ENCODE measurements at regions of chr2 and their contacts with region 1.

Region 1: DNA sequence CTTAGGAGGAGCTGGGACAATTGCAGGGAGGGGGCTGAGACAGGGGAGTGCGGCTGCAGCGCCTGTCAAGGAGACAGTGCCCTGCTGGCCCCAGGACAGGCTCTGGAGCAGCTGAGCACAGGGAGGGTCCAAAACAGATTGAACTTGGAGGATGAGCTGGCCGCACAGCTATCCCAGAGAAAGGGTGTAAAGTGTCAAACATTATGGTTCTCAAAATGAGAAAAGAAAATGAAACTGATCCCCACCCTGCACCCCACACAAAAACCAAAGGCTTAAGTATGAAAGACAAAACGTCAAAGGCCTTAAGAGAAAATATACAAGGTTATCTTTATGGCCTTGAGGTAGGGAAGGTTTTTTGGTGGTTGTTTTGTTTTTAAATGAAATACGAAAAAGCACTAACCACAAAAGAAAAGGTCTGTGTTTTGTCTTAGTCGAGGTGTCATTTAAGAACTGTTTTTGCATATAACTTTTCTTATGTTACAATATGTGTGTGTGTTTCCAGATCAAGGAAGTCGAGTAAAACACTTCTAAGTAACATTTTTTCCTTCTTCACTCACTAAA is 111.8 kb downstream of the HDAC4 start:
- DNase-seq: peak; percentile 60
- ATAC-seq: peak; percentile 57
- H3K4me3 Mint-ChIP-seq: peak overlapping the region; percentile 88
- H3K27ac Mint-ChIP-seq: peak overlapping the region; percentile 99
- H3K4me1 Mint-ChIP-seq: peaks cover 62% of the 10 kb centered on the region
- H3K27me3 Mint-ChIP-seq: no peaks in the 10 kb centered on the region

Region 2: DNA sequence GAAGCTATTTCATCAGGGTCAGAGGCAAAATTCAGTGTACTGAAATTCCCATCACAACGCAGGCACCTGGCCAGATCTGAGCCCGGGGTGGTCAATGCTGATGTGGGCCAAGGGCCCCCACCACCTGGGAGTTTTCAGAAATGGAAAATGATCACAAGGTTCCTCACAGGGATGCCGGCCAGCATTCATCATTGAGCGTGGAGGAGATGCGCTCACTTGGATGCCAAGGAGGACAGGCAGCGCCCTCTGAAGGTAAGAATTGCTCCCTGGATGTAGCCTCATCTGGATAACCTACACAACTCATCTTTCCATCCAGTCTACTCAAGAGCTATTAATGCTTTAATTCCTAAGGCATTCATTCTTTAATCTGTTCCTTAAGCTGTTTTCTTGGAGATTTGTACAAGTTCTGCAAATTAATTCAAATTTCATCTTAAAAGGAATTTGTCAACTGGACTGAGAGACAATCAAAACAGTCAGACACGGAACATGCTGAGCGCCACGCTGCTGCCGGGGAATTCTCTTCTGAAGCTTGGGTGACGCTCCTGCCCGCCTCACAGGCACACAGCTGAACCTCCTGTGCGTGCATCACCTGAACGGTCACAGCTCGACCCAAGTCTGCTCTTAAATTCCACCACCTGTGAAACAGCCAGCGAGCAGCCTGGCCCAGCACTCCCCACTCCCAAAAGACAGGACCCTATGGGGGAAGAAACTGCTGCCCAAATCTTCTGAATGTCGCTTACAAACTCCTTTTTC is 94.9 kb before region 1 on chr2:
- POLR2A ChIA-PET with region 1: no interaction called
- DNase-seq: peak; percentile 9
- ATAC-seq: no peak
- H3K4me3 Mint-ChIP-seq: no peak overlapping the region
- H3K27ac Mint-ChIP-seq: no peak overlapping the region
- H3K4me1 Mint-ChIP-seq: peaks cover 2% of the 10 kb centered on the region
- H3K27me3 Mint-ChIP-seq: no peaks in the 10 kb centered on the region

Region 3: GRCh38 chr2:239275044-239275685 is 13.9 kb before region 1 on chr2:
- POLR2A ChIA-PET with region 1: interaction called, 17 read pairs
- DNase-seq: peak; percentile 67
- ATAC-seq: peak; percentile 93
- H3K4me3 Mint-ChIP-seq: peak overlapping the region; percentile 77
- H3K27ac Mint-ChIP-seq: peak overlapping the region; percentile 92
- H3K4me1 Mint-ChIP-seq: peaks cover 41% of the 10 kb centered on the region
- H3K27me3 Mint-ChIP-seq: no peaks in the 10 kb centered on the region